Heart left ventricle (tissue), 16 donors: ENCODE measurements at regions of chr15 and their contacts with region 1.

Region 1: DNA sequence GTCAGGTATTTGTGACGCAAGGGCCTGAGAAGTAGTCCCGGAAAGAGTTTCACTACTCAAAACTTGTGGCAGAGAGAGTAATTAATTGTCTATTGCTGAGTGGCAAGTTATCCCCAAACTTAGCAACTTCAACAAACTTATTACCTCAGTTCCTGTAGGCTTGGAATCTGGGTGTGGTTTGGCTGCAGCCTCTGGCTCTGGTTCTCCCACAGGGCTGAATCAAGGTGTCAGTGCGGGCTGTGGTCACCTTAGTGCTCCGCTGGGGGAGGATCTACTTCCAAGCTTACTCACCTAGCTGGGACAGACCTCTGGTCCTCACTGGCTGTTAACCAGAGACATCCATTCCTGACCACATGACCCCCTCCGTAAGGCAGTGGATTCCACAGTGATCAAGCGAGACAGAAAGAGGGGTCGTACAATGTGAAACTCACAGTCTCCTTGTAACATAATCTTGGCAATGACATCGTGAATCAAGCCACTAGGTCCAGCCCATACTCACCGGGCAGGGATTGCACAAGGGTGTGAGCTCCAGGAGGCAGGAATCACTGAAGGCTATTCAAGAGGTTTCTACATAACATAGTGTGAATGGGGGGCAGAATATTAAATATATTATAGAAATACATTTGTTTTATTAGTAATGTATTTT is 138.3 kb downstream of the RYR3 start:
- DNase-seq: no peak
- ATAC-seq: no peak
- H3K4me3 ChIP-seq: no peak overlapping the region
- H3K27ac ChIP-seq: no peak overlapping the region
- H3K4me1 ChIP-seq: no peaks in the 10 kb centered on the region
- H3K27me3 ChIP-seq: peaks cover 0 to 2% (median 0%) of the 10 kb centered on the region in 9 donors
- CTCF ChIP-seq: no peak
- POLR2A ChIP-seq: no peak

Region 2: DNA sequence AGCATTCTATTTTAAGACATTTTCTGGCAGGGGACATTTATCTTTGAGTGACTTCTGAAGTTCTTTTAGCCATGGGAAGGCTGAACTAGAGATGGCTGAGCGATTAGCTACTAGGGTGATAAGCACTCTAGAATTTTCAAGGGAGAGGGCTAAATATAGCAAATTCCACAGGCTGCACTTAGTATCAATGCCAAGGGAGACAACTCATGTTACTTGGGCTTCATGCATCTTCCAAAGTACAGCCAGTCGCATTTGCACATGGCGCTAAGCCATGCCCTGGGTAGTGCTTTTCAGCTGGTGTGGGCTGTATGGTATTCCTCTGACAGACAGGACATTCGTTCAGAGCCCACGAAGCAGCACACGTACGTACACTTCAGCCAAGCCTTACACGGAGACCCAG is 68.7 kb before region 1 on chr15:
- intact Hi-C with region 1: loop called in 1 of 10 experiments (anchors 10 kb)
- DNase-seq: no peak
- ATAC-seq: no peak
- H3K4me3 ChIP-seq: no peak overlapping the region
- H3K27ac ChIP-seq: no peak overlapping the region
- H3K4me1 ChIP-seq: no peaks in the 10 kb centered on the region
- H3K27me3 ChIP-seq: peaks cover 0 to 2% (median 0%) of the 10 kb centered on the region in 9 donors
- CTCF ChIP-seq: no peak
- POLR2A ChIP-seq: no peak

Region 3: GRCh38 chr15:33402600-33402999 is 46.5 kb before region 1 on chr15:
- intact Hi-C with region 1: no loop called
- DNase-seq: no peak
- ATAC-seq: no peak
- H3K4me3 ChIP-seq: no peak overlapping the region
- H3K27ac ChIP-seq: no peak overlapping the region
- H3K4me1 ChIP-seq: no peaks in the 10 kb centered on the region
- H3K27me3 ChIP-seq: no peaks in the 10 kb centered on the region
- CTCF ChIP-seq: no peak
- POLR2A ChIP-seq: no peak

Region 4: GRCh38 chr15:33506781-33507296 is 57.8 kb after region 1 on chr15:
- intact Hi-C with region 1: loop called in 2 of 10 experiments (anchors 10 kb)
- DNase-seq: no peak
- ATAC-seq: no peak
- H3K4me3 ChIP-seq: no peak overlapping the region
- H3K27ac ChIP-seq: no peak overlapping the region
- H3K4me1 ChIP-seq: no peaks in the 10 kb centered on the region
- H3K27me3 ChIP-seq: no peaks in the 10 kb centered on the region
- CTCF ChIP-seq: peak in 1 of 12 donors; percentile 12
- POLR2A ChIP-seq: no peak